ENCODE measurements at regions of chr22 and their contacts with region 1.

Region 1: DNA sequence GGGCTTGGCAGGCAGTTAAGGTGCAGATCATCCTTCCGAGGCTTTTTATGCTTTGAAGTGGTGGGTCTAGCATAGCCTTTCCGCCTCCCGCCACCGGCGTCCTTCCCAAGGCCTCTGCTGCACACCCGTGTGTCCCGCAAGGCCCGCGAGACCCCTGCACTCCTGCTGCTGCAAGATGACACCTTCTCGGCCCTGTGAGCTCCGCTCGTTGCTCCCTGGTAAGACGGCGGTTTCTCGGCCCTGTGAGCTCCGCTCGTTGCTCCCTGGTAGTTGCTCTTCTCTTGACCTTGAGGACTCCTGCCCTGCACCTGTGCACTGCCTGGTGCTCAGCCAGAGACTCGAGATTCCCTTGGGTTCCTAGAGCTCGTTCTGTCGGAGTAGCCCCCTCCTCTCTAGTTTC is 17.9 kb upstream of the TRMU start:
- DNase-seq: no peak
- H3K4me3 ChIP-seq: no peak overlapping the region
- H3K27ac ChIP-seq: no peak overlapping the region
- H3K4me1 ChIP-seq: no peaks in the 10 kb centered on the region
- H3K27me3 ChIP-seq: no peaks in the 10 kb centered on the region
- CTCF ChIP-seq: no peak
- EP300 ChIP-seq: no peak
- POLR2A ChIP-seq: no peak

Region 2: DNA sequence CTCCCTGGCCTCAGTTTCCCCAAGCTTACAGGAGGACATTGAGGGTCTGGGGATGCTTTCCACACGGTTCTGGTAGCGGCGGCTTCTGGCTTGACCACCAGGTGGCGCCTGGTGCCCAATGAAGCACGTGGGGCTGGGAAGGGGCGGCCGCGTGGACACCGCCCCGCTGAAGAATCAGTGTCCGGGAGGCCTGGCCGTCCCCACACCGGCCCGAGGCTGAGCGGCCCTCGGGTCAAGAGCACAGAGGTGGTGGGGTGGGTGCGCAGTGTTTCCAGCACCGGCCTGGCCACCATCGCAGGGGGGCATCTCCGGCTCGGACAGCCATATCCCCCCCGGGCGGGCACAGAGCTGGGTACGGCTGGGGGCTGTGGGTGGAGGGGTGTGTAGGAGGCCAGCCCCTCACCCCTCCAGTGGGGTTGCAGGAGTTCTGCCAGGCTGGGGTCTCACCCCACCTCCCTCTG is 195.1 kb before region 1 on chr22:
- in situ Hi-C with region 1: loop called (anchors 5 to 10 kb)
- intact Hi-C with region 1: loop called (anchors 5 kb)
- DNase-seq: peak; percentile 78
- H3K4me3 ChIP-seq: peak overlapping the region in 1 of 4 donors; percentile 7
- H3K27ac ChIP-seq: no peak overlapping the region
- H3K4me1 ChIP-seq: peaks cover 4 to 20% (median 14%) of the 10 kb centered on the region in 4 donors
- H3K27me3 ChIP-seq: no peaks in the 10 kb centered on the region
- CTCF ChIP-seq: peak; percentile 94 to 97 (median 96)
- EP300 ChIP-seq: no peak
- POLR2A ChIP-seq: no peak